K562 (cell line): ENCODE measurements at regions of chr16 and their contacts with region 1.

Region 1: GRCh38 chr16:28277537-28278388 is 14.6 kb upstream of the SBK1 start:
- DNase-seq: peak; percentile 79 to 86 (median 82)
- ATAC-seq: peak; percentile 96
- H3K4me3 ChIP-seq: peak overlapping the region; percentile 11; the same call in 1 of the 2 replicates
- H3K27ac ChIP-seq: no peak overlapping the region
- H3K4me1 ChIP-seq: peaks cover 4 to 14% of the 10 kb centered on the region in 2 experiments; a peak in 2 of 5 replicates
- H3K27me3 ChIP-seq: peaks cover 21 to 54% of the 10 kb centered on the region in 2 experiments; a peak in 4 of 5 replicates
- CTCF ChIP-seq: peak; percentile 93 to 95 (median 95)
- EP300 ChIP-seq: no peak
- POLR2A ChIP-seq: no peak
- RAD21 ChIP-seq: peak; percentile 91 to 95

Region 2: GRCh38 chr16:28025631-28026030 is 252.1 kb before region 1 on chr16:
- CTCF ChIA-PET with region 1: no interaction called
- POLR2A ChIA-PET with region 1: no interaction called
- in situ Hi-C with region 1: no loop called
- intact Hi-C with region 1: no loop called
- DNase-seq: no peak
- ATAC-seq: no peak
- H3K4me3 ChIP-seq: no peak overlapping the region
- H3K27ac ChIP-seq: no peak overlapping the region
- H3K4me1 ChIP-seq: no peaks in the 10 kb centered on the region
- H3K27me3 ChIP-seq: peaks cover 2 to 19% of the 10 kb centered on the region in 2 experiments; a peak in 3 of 5 replicates
- CTCF ChIP-seq: no peak
- EP300 ChIP-seq: no peak
- POLR2A ChIP-seq: no peak
- RAD21 ChIP-seq: no peak

Region 3: GRCh38 chr16:28317040-28317880 is 39.5 kb after region 1 on chr16:
- CTCF ChIA-PET with region 1: interaction called, 38 read pairs
- POLR2A ChIA-PET with region 1: no interaction called
- in situ Hi-C with region 1: no loop called
- intact Hi-C with region 1: loop called (anchors 2 kb)
- DNase-seq: peak; percentile 75 to 82 (median 78)
- ATAC-seq: peak; percentile 89
- H3K4me3 ChIP-seq: no peak overlapping the region
- H3K27ac ChIP-seq: no peak overlapping the region
- H3K4me1 ChIP-seq: peaks cover 0 to 27% of the 10 kb centered on the region in 2 experiments; a peak in 2 of 5 replicates
- H3K27me3 ChIP-seq: peaks cover 0 to 25% of the 10 kb centered on the region in 2 experiments; a peak in 2 of 5 replicates
- CTCF ChIP-seq: peak; percentile 83 to 88 (median 85)
- EP300 ChIP-seq: no peak
- POLR2A ChIP-seq: no peak
- RAD21 ChIP-seq: peak; percentile 51 to 76

Region 4: DNA sequence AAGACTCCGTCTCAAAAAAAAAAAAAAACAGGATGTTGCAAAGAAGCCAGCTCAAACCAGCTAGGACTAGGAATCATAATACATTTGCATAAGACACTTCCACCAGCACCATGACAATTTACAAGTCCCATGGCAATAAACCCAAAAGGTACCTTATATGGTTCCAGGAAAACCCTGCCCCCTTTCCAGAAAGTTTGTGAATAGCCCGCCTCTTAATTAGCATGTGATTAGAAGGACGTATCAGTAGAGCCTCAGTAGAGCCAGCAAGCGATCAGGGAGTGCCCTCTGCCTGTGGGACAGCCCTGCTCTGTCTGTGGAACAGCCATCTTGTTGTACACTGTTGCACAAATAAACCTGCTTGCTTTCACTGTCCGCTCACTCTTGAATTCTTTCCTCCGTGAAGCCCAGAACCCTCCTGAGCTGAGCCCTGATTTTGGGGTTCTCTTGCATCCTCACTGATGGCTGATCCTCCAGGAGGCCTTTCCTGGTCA is 247.0 kb after region 1 on chr16:
- CTCF ChIA-PET with region 1: no interaction called
- POLR2A ChIA-PET with region 1: no interaction called
- in situ Hi-C with region 1: no loop called
- intact Hi-C with region 1: loop called (anchors 10 kb)
- DNase-seq: peak in 3 of 4 experiments; percentile 17 to 61 (median 50)
- ATAC-seq: peak; percentile 96
- H3K4me3 ChIP-seq: no peak overlapping the region
- H3K27ac ChIP-seq: 0 out of 3 replicates have a peak overlapping the region, but pooled peaks have one; percentile 28
- H3K4me1 ChIP-seq: peaks cover 0 to 13% of the 10 kb centered on the region in 2 experiments; a peak in 3 of 5 replicates
- H3K27me3 ChIP-seq: no peaks in the 10 kb centered on the region
- CTCF ChIP-seq: peak; percentile 37 to 58 (median 52); a peak in 5 of 6 replicates
- EP300 ChIP-seq: no peak
- POLR2A ChIP-seq: no peak
- RAD21 ChIP-seq: peak; percentile 45 to 65